Calu3 (cell line): ENCODE measurements at regions of chr10 and their contacts with region 1.

Region 1: GRCh38 chr10:124916585-124917427 is 25.1 kb upstream of the ZRANB1 start:
- DNase-seq: peak; percentile 94
- H3K4me3 Mint-ChIP-seq: peak overlapping the region; percentile 80
- H3K27ac Mint-ChIP-seq: peak overlapping the region; percentile 88
- H3K4me1 Mint-ChIP-seq: peaks cover 14% of the 10 kb centered on the region
- H3K27me3 Mint-ChIP-seq: peaks cover 10% of the 10 kb centered on the region
- CTCF ChIP-seq: no peak

Region 2: DNA sequence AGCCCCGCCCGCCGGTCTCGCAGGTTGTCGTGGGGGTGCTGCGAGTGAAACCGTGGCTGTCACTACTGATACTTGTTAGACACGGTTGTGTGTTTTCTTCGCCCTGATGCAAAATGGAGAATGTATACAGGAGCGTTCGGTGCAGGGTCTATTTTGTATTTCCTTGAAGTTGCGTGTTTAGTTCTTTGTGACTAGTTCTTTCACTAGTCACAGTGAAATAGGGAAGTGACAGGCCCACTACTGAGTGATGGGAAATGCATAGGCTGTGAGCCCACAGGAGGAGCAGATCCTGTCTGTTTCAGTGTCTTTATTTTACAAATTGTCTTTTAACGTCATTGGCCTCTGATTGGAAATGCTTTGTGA is 114.5 kb before region 1 on chr10:
- CTCF ChIA-PET with region 1: no interaction called
- intact Hi-C with region 1: loop called (anchors 5 kb)
- DNase-seq: no peak
- H3K4me3 Mint-ChIP-seq: peak overlapping the region; percentile 88
- H3K27ac Mint-ChIP-seq: no peak overlapping the region
- H3K4me1 Mint-ChIP-seq: no peaks in the 10 kb centered on the region
- H3K27me3 Mint-ChIP-seq: peaks cover 22% of the 10 kb centered on the region
- CTCF ChIP-seq: no peak

Region 3: DNA sequence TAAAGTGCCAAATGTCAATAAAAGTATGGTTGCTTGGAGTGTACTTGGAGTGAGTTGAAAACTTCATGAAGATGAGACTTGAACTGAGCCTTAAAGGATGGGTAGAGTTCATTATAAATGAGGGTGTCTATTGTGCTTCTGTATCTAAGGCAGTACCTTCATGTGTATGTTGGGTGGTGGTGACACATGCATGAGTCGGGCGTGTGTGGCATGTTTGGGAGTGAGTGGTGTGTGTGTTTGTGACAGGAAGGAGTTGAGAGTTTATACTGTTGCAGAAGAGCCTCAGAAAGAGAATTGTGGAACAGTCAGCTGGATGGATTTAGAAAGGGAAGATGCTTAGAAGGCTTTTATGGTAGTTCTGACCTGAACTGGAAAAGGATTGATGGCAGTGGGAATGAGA is 19.1 kb after region 1 on chr10:
- CTCF ChIA-PET with region 1: no interaction called
- intact Hi-C with region 1: no loop called
- DNase-seq: no peak
- H3K4me3 Mint-ChIP-seq: no peak overlapping the region
- H3K27ac Mint-ChIP-seq: no peak overlapping the region
- H3K4me1 Mint-ChIP-seq: peaks cover 10% of the 10 kb centered on the region
- H3K27me3 Mint-ChIP-seq: no peaks in the 10 kb centered on the region
- CTCF ChIP-seq: no peak